ENCODE measurements at regions of chr10 and their contacts with region 1.

Region 1: GRCh38 chr10:118720685-118721538 is 33.9 kb downstream of the CACUL1 start:
- DNase-seq: peak; percentile 80
- ATAC-seq: no peak
- H3K4me3 ChIP-seq: no peak overlapping the region
- H3K27ac ChIP-seq: no peak overlapping the region
- H3K4me1 ChIP-seq: 0 out of 2 replicates have a peak, but pooled peaks cover 3% of the 10 kb centered on the region
- H3K27me3 ChIP-seq: no peaks in the 10 kb centered on the region
- CTCF ChIP-seq: peak; percentile 78

Region 2: GRCh38 chr10:118300320-118300719 is 420.6 kb before region 1 on chr10:
- CTCF ChIA-PET with region 1: no interaction called
- POLR2A ChIA-PET with region 1: no interaction called
- intact Hi-C with region 1: no loop called
- DNase-seq: peak; percentile 62
- ATAC-seq: peak; percentile 78
- H3K4me3 ChIP-seq: no peak overlapping the region
- H3K27ac ChIP-seq: no peak overlapping the region
- H3K4me1 ChIP-seq: peaks cover 19% of the 10 kb centered on the region; the same call in 1 of the 2 replicates
- H3K27me3 ChIP-seq: no peaks in the 10 kb centered on the region
- CTCF ChIP-seq: no peak

Region 3: GRCh38 chr10:118753331-118754228 is 32.7 kb after region 1 on chr10:
- CTCF ChIA-PET with region 1: interaction called, 3 read pairs
- POLR2A ChIA-PET with region 1: interaction called, 6 read pairs
- intact Hi-C with region 1: loop called (anchors 2 kb)
- DNase-seq: peak; percentile 32
- ATAC-seq: peak; percentile 8
- H3K4me3 ChIP-seq: peak overlapping the region; percentile 99
- H3K27ac ChIP-seq: peak overlapping the region; percentile 29; the same call in 1 of the 2 replicates
- H3K4me1 ChIP-seq: peaks cover 16% of the 10 kb centered on the region
- H3K27me3 ChIP-seq: no peaks in the 10 kb centered on the region
- CTCF ChIP-seq: no peak

Region 4: GRCh38 chr10:118800920-118801319 is 80.0 kb after region 1 on chr10:
- CTCF ChIA-PET with region 1: no interaction called
- POLR2A ChIA-PET with region 1: no interaction called
- intact Hi-C with region 1: loop called (anchors 2 kb)
- DNase-seq: peak; percentile 41
- ATAC-seq: peak; percentile 69; the same call in 1 of the 2 replicates
- H3K4me3 ChIP-seq: no peak overlapping the region
- H3K27ac ChIP-seq: no peak overlapping the region
- H3K4me1 ChIP-seq: peaks cover 21% of the 10 kb centered on the region
- H3K27me3 ChIP-seq: no peaks in the 10 kb centered on the region
- CTCF ChIP-seq: peak; percentile 66

Measured in PC-3 (cell line).